SK-N-SH (cell line): ENCODE measurements at regions of chr2 and their contacts with region 1.

Region 1: GRCh38 chr2:88739985-88740600 is 48.6 kb downstream of the RPIA start:
- DNase-seq: peak; percentile 75
- H3K4me3 ChIP-seq: peak overlapping the region in 1 of 2 experiments; percentile 35; a peak in 1 of 4 replicates
- H3K27ac ChIP-seq: no peak overlapping the region
- H3K4me1 ChIP-seq: peaks cover 2 to 8% of the 10 kb centered on the region in 2 experiments; a peak in 2 of 4 replicates
- H3K27me3 ChIP-seq: no peaks in the 10 kb centered on the region
- CTCF ChIP-seq: peak; percentile 95
- EP300 ChIP-seq: no peak
- RAD21 ChIP-seq: peak; percentile 75

Region 2: GRCh38 chr2:88683160-88684021 is 56.7 kb before region 1 on chr2:
- CTCF ChIA-PET with region 1: no interaction called
- POLR2A ChIA-PET with region 1: no interaction called
- DNase-seq: no peak
- H3K4me3 ChIP-seq: no peak overlapping the region
- H3K27ac ChIP-seq: no peak overlapping the region
- H3K4me1 ChIP-seq: no peaks in the 10 kb centered on the region; a peak in 1 of 4 replicates
- H3K27me3 ChIP-seq: no peaks in the 10 kb centered on the region
- CTCF ChIP-seq: no peak
- EP300 ChIP-seq: no peak
- RAD21 ChIP-seq: no peak

Region 3: DNA sequence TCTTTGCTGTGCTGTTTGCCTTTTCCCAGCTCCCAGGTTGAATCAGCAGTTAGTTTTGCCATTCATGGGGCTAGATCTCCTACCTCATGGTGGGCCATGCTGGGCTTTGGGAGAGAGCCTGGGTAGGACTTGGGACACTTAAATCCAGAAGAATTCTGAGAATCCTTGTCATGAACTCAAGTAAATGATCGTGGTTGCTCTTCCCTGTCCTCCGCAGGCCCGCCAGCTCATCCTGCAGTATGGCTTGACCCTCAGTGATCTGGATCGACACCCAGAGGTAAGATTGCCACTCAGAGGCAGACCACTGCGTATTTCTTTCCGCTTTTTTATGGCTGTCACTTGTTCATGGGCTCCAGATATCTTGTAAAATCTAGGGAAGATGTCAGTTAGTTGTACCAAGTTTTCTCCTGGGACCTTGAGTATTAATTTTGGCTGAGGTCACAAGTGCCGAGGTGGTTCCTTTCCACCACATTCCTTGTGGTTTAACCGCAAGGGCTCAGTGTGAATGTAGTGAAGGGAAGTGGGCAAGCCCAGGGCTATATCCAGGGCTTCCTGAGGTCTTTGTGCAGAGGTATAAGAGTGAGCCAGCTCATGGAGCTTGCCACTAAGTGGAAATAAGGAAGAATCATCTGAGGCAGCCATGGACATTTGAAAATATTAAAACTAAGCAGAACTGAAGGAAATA is 10.9 kb before region 1 on chr2:
- CTCF ChIA-PET with region 1: interaction called, 13 read pairs
- POLR2A ChIA-PET with region 1: no interaction called
- DNase-seq: no peak
- H3K4me3 ChIP-seq: no peak overlapping the region
- H3K27ac ChIP-seq: no peak overlapping the region
- H3K4me1 ChIP-seq: peaks cover 0 to 12% of the 10 kb centered on the region in 2 experiments; a peak in 1 of 4 replicates
- H3K27me3 ChIP-seq: no peaks in the 10 kb centered on the region
- CTCF ChIP-seq: no peak
- EP300 ChIP-seq: no peak
- RAD21 ChIP-seq: no peak

Region 4: GRCh38 chr2:88753833-88754584 is 13.9 kb after region 1 on chr2:
- CTCF ChIA-PET with region 1: interaction called, 50 read pairs
- POLR2A ChIA-PET with region 1: no interaction called
- DNase-seq: no peak
- H3K4me3 ChIP-seq: no peak overlapping the region
- H3K27ac ChIP-seq: no peak overlapping the region
- H3K4me1 ChIP-seq: no peaks in the 10 kb centered on the region; a peak in 1 of 4 replicates
- H3K27me3 ChIP-seq: no peaks in the 10 kb centered on the region
- CTCF ChIP-seq: no peak
- EP300 ChIP-seq: no peak
- RAD21 ChIP-seq: no peak

Region 5: DNA sequence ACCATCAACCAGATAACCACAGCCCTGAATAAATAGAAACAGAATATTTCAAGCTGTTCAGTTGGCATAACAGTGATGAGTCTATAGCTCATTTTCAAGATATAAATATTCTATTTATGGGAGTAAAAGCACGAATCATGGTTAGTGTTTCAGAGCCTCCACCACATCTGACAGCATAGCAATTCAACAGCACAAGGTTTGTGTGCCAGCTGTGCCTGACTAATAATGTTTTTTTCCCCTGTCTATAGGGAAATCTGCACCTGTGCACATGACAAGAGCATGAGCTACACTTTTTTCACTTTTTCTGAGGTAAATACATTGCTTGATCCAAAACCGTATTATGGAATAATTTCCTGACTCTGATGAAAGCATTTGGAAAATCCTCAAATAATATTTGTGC is 202.7 kb after region 1 on chr2:
- CTCF ChIA-PET with region 1: no interaction called
- POLR2A ChIA-PET with region 1: no interaction called
- DNase-seq: no peak
- H3K4me3 ChIP-seq: no peak overlapping the region
- H3K27ac ChIP-seq: no peak overlapping the region
- H3K4me1 ChIP-seq: no peaks in the 10 kb centered on the region
- H3K27me3 ChIP-seq: no peaks in the 10 kb centered on the region
- CTCF ChIP-seq: no peak
- EP300 ChIP-seq: no peak
- RAD21 ChIP-seq: no peak